Endothelial cell of umbilical vein (primary cell): ENCODE measurements at regions of chr12 and their contacts with region 1.

Region 1: GRCh38 chr12:93378373-93379325 is 924 bp downstream of the NUDT4 start:
- DNase-seq: peak; percentile 52
- H3K4me3 ChIP-seq: peak overlapping the region; percentile 71 to 99 (median 95)
- H3K27ac ChIP-seq: peak overlapping the region; percentile 79
- H3K4me1 ChIP-seq: peaks cover 29% of the 10 kb centered on the region
- H3K27me3 ChIP-seq: no peaks in the 10 kb centered on the region
- CTCF ChIP-seq: no peak
- POLR2A ChIP-seq: no peak

Region 2: GRCh38 chr12:93002293-93003054 is 376.2 kb before region 1 on chr12:
- CTCF ChIA-PET with region 1: interaction called, 6 read pairs
- POLR2A ChIA-PET with region 1: no interaction called
- dilution Hi-C with region 1: loop called (anchors 25 kb)
- intact Hi-C with region 1: loop called (anchors 5 kb)
- DNase-seq: peak; percentile 99
- H3K4me3 ChIP-seq: no peak overlapping the region
- H3K27ac ChIP-seq: peak overlapping the region; percentile 95
- H3K4me1 ChIP-seq: peaks cover 26% of the 10 kb centered on the region
- H3K27me3 ChIP-seq: no peaks in the 10 kb centered on the region
- CTCF ChIP-seq: no peak
- POLR2A ChIP-seq: no peak

Region 3: DNA sequence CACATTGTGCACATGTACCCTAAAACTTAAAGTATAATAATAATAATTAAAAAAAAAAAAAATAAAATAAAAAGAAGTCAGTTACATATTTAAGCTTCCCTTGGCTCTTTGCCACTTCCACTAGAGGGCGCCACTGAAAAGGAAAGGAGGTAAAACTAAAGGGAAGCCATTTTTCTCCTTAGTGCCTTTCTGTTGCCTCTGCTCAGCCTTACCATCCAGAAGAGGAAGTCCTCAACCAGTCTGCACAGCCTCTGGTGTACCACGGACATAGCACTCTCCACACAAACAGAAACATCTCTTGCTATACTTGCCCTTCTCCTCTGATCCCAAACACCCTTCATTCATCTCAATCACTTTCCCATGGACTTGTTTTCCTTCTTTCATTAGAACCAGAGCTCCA is 280.6 kb before region 1 on chr12:
- CTCF ChIA-PET with region 1: interaction called, 12 read pairs
- POLR2A ChIA-PET with region 1: no interaction called
- dilution Hi-C with region 1: no loop called
- intact Hi-C with region 1: loop called (anchors 5 kb)
- DNase-seq: peak; percentile 53
- H3K4me3 ChIP-seq: no peak overlapping the region
- H3K27ac ChIP-seq: no peak overlapping the region
- H3K4me1 ChIP-seq: no peaks in the 10 kb centered on the region
- H3K27me3 ChIP-seq: no peaks in the 10 kb centered on the region
- CTCF ChIP-seq: peak; percentile 21 to 22
- POLR2A ChIP-seq: no peak

Region 4: DNA sequence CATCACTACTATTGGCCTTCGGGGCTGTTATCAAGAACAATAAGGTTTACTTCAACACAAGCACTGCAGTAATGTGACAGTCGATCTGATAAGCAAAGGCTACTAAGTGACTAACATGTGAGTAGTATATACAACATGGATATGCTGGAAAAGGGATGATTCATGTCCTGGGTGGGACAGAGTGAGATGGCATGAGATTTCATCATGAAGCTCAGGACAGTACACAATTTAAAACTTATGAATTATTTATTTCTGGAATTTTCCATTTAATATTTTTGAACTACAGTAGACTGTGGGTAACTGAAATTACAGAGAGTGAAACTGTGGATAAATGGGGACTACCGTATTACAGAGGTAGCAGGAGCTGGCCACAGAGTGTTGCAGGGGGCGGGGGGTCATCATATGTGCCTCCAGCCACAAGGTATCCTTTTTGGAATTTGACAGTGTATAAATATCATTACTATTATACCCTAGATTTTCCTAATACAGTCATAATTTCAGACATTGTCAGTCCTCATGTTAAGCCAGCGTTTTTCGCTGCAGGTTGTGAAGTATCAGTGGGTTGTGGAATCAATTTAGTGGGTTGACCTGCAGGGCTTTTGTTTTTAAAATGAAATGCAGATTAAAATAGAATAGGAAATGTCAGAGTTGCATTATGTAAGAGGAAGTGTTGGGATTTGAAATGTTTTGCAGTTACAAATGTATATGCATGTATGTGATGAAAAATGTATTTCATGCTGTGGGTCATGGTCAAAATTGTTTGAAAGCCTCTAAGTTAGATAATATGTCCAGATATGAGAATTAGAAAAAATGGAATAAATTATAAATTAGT is 148.9 kb before region 1 on chr12:
- CTCF ChIA-PET with region 1: no interaction called
- POLR2A ChIA-PET with region 1: no interaction called
- dilution Hi-C with region 1: no loop called
- intact Hi-C with region 1: loop called (anchors 10 kb)
- DNase-seq: peak; percentile 72
- H3K4me3 ChIP-seq: no peak overlapping the region
- H3K27ac ChIP-seq: peak overlapping the region; percentile 57
- H3K4me1 ChIP-seq: peaks cover 21% of the 10 kb centered on the region
- H3K27me3 ChIP-seq: no peaks in the 10 kb centered on the region
- CTCF ChIP-seq: no peak
- POLR2A ChIP-seq: no peak